Activated T-helper 1 cell treated with anti-CD3 and anti-CD28 coated beads, Interleukin-12 subunit alpha, Interleukin-12 subunit beta, Interleukin-2, Interleukin-4 antibody, amounts not matched to agents 30 ng/mL and 10 ng/mL and 1 ng/mL, durations not matched to agents 14 hours and 24 hours and 36 hours (primary cell): ENCODE measurements at regions of chr16 and their contacts with region 1.

Region 1: DNA sequence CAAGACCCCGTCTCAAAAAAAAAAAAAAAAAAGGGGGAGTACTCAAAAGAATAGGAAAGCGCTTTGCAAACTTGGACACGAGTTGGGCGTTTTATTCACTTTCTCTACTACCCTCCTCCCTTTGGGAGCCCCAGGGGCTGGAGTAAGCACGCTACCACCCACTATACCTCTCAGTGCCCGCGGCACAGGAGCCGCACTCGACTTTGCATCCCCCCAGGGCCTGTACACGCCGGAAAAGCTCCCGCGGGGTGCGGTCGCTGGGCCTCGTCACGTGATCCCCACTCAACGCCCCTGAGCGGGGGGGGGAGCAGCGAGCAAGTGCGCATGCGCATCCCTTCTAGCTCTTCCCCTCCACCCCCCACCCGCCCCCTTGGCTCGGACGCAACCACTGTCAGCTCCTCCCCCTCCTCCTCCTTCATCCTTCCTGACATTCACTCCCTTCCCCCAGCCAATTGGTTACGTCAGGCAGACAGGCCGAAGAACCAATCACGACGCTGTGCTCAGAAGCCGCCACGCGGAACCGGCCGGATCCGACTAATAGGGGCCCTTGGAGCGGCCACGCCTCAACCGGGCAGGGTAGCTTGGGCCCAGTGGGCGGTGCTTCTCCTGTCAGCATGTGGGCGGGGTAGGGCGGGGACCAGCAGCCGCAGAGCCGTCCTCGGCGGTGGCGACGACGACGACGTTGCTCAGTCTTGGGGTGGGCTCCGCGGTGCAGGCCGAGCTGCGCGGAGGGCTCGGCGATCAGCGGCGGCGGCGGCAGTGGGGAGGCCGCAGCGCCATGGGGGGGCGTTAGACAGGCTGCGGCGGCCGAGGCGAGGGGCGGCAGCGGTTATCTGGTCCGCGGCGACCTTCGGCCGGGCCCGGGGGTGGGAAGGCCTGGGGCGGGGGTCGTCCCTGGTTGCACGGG is at the start of gene HAPSTR1:
- DNase-seq: peak; percentile 98
- H3K4me3 Mint-ChIP-seq: peak within 1 kb of the TSS; percentile 97
- H3K27ac Mint-ChIP-seq: peak within 1 kb of the TSS; percentile 96
- H3K4me1 Mint-ChIP-seq: peaks cover 38% of the 10 kb centered on the region
- H3K27me3 Mint-ChIP-seq: peaks cover 1% of the 10 kb centered on the region
- total RNA-seq, gene HAPSTR1: 55.2 and 59.1 TPM in 2 replicates

Region 2: GRCh38 chr16:8797364-8798173 is 293.6 kb before region 1 on chr16 and contains the starts of genes PMM2 and TMEM186:
- intact Hi-C with region 1: loop called (anchors 1 kb)
- DNase-seq: peak; percentile 95
- H3K4me3 Mint-ChIP-seq: peak within 1 kb of the TSS; percentile 96
- H3K27ac Mint-ChIP-seq: peak within 1 kb of the TSS; percentile 82
- H3K4me1 Mint-ChIP-seq: peaks cover 42% of the 10 kb centered on the region
- H3K27me3 Mint-ChIP-seq: no peaks in the 10 kb centered on the region
- total RNA-seq, gene PMM2: 82.9 and 88.7 TPM in 2 replicates
- total RNA-seq, gene TMEM186: 16.9 and 19.0 TPM in 2 replicates

Region 3: DNA sequence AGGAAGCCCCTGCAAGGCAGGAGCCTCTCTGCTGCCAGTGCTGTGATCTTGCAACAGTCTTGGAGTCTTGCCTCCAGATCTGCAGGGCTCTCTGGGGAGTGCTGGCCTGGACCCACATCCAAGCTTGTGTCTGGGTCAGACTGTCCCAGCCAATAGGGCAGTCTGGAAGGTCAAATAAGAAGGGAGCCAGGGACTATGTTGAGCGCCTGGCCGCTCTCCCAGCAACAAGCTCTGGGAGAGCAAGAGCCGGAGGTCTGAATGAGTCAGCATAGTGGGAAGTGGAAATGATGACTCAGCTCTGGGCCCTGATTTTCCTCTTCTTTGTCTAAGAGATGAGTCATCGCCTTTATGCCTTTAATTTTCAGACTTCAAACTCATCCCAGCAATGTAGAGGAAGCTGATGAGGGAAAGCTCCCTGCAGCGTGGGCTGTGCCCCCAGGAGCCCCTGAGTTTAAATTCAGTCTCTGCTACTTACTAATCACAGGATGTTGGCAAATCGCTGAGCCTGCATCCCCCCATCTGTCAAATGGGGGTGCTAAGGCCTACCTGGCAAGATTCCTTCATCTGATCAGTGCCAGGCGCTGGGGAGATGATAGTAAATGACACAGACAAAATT is 43.4 kb before region 1 on chr16:
- intact Hi-C with region 1: loop called (anchors 1 kb)
- DNase-seq: peak; percentile 53
- H3K4me3 Mint-ChIP-seq: peak overlapping the region; percentile 20
- H3K27ac Mint-ChIP-seq: peak overlapping the region; percentile 61
- H3K4me1 Mint-ChIP-seq: peaks cover 27% of the 10 kb centered on the region
- H3K27me3 Mint-ChIP-seq: no peaks in the 10 kb centered on the region

Region 4: GRCh38 chr16:9107025-9107970 is 16.1 kb after region 1 on chr16:
- intact Hi-C with region 1: loop called (anchors 1 kb)
- DNase-seq: no peak
- H3K4me3 Mint-ChIP-seq: no peak overlapping the region
- H3K27ac Mint-ChIP-seq: peak overlapping the region; percentile 49
- H3K4me1 Mint-ChIP-seq: peaks cover 76% of the 10 kb centered on the region
- H3K27me3 Mint-ChIP-seq: no peaks in the 10 kb centered on the region

Region 5: DNA sequence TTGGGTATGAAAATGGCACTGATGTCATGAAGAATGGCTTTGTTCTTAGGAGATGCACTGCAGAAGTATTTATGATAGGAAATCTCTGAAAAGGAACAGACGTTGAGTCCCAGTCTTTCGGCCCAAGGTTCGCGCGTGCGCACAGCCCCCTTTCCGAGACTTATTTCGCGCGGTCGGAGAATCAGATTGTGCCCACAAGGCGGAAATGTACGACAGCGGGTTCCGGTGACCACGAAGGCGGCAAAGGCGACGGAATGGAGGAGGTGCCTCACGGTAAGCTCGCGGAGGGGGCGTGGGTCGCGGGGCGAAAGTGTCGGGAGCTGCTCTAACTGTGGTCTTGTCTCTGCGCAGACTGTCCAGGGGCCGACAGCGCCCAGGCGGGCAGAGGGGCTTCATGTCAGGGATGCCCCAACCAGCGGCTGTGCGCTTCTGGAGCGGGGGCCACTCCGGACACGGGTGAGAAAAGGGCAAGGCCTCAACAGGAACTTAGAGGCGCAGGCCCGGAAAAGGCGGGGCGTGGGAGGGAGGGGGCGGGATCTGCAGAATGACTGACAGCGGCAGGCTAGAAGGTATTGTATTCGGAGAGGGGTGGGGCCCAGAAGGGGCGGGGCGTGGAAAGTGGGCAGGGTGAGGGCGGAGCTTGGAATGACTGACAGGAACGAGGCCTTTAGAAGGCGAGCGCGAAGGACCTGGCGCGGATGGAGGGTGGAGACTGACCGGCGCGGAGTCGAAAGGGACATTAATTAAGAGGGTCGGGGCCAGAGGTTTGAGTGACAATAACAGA is 1652.6 kb after region 1 on chr16 and contains the start of gene NUBP1:
- intact Hi-C with region 1: loop called (anchors 1 kb)
- DNase-seq: peak; percentile 97
- H3K4me3 Mint-ChIP-seq: peak within 1 kb of the TSS; percentile 87
- H3K27ac Mint-ChIP-seq: peak within 1 kb of the TSS; percentile 93
- H3K4me1 Mint-ChIP-seq: peaks cover 57% of the 10 kb centered on the region
- H3K27me3 Mint-ChIP-seq: no peaks in the 10 kb centered on the region
- total RNA-seq, gene NUBP1: 39.8 and 42.4 TPM in 2 replicates